Dorsolateral prefrontal cortex (tissue), 120 donors: ENCODE measurements at regions of chr16 and their contacts with region 1.

Region 1: DNA sequence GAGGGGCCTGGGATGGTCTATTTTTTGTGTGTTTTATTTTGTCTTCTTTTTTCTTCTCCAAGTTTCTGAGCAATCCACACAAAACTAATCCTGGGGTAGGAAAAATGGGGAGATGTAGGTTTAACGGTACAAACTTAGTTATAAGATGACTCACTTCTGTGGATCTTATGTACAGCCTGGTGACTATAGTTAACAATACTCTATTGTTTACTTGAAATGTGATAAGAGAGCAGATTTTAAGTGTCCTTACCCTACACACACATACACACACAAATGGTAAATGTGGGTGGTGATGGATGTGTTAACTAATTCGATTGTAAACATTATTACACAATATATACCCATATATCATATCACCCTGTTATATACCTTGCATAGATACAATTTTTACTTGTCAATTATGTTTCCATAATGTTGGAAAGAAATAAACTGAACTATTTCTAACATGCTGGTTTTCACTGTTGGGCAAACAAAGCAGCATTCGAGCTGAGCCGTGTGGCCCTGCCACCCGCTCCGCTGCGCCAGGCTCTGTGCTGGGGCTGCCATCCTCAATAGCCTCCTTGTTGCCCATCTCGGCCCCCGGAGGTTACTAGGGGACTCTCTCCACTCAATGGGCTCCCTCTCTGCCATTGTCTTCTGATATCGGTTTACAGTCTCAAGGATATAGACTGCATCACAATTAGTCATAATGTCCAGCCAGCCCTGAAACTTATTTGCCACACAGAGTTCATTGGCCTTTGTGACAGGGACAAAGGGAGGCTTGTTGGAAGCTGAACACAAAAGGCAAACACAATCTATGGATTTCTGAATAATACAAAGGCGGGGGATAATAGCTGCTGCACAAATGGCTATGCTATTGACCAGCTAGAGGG is 380.3 kb upstream of the MAF start:
- DNase-seq: peak in 9 of 10 donors; percentile 54 to 82 (median 75)
- H3K4me3 ChIP-seq: peak overlapping the region in 2 of 59 donors; percentile 5 to 22
- H3K27ac ChIP-seq: peak overlapping the region in 19 of 59 donors; percentile 2 to 75 (median 27)
- H3K27me3 ChIP-seq: peaks cover 0 to 19% (median 0%) of the 10 kb centered on the region in 45 donors
- CTCF ChIP-seq: peak in 9 of 56 donors; percentile 5 to 31 (median 15)

Region 2: DNA sequence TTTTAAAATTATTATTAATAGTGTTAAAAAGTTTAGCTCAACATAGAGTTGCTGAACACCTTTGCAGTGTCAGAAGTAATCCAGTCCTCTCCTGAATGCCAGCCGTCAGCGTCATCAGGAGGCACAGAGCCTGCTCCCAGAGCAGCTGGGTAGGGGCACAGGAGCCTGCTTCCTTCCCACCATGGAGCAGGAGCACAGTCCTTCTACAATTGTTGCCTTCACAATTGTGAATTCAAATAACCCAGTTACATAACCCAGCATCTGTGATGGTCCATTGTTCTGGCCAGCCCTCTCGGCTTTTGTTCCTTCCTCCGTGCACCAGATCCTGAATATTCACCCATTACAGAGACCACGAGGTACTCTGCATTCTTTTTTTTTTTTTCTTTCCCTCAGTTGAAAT is 13.5 kb after region 1 on chr16:
- intact Hi-C with region 1: loop called in 1 of 2 experiments (anchors 1 kb)
- DNase-seq: peak; percentile 35 to 78 (median 65)
- H3K4me3 ChIP-seq: peak overlapping the region in 3 of 59 donors; percentile 9 to 13 (median 12)
- H3K27ac ChIP-seq: peak overlapping the region in 37 of 59 donors; percentile 8 to 80 (median 53)
- H3K27me3 ChIP-seq: peaks cover 0 to 6% (median 0%) of the 10 kb centered on the region in 45 donors
- CTCF ChIP-seq: peak in 5 of 56 donors; percentile 9 to 34 (median 27)